ENCODE measurements at regions of chr11 and their contacts with region 1.

Region 1: GRCh38 chr11:44927174-44927661 is 23.5 kb downstream of the TP53I11 start:
- DNase-seq: peak; percentile 78 to 90
- ATAC-seq: peak; percentile 64
- H3K4me3 ChIP-seq: no peak overlapping the region
- H3K27ac ChIP-seq: no peak overlapping the region
- H3K4me1 ChIP-seq: no peaks in the 10 kb centered on the region
- H3K27me3 ChIP-seq: no peaks in the 10 kb centered on the region

Region 2: DNA sequence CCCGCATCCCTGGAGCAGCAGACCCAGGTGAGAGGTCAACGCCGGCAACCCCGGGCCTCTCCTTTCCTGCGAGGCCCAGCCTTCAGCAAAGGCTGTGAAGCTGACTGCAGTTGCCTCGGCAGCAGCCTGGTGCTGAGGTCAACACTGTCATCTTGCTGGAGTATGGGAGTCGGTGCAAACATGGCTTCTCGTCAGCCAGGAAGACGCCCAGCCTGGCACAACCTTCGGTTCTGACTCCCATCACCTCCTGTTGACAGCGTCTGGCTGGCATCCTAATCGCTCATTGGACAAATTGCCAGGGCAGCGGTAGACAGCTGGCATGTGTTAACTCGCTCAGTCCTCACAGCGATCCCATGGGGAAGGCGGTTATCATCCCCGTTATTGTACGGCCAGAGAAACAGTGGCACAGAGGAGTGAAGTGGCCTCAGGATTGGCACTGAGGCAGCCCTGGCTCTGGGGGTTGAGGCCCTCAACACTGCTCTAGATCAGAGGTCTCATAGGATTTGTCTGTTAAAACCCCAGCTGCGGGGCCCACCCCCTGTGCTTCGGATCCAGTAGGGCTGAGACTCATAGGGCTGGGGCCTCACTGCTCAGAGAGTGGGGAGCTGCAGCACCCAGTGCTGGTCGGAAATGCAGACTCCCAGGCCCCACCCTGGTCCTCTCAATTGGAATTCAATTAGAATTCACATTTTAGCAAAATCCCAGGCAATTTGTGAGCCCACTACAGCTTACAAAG is 62.8 kb after region 1 on chr11:
- intact Hi-C with region 1: no loop called
- DNase-seq: peak in 1 of 2 donors; percentile 81
- ATAC-seq: peak; percentile 33
- H3K4me3 ChIP-seq: no peak overlapping the region
- H3K27ac ChIP-seq: no peak overlapping the region
- H3K4me1 ChIP-seq: no peaks in the 10 kb centered on the region
- H3K27me3 ChIP-seq: no peaks in the 10 kb centered on the region

Region 3: DNA sequence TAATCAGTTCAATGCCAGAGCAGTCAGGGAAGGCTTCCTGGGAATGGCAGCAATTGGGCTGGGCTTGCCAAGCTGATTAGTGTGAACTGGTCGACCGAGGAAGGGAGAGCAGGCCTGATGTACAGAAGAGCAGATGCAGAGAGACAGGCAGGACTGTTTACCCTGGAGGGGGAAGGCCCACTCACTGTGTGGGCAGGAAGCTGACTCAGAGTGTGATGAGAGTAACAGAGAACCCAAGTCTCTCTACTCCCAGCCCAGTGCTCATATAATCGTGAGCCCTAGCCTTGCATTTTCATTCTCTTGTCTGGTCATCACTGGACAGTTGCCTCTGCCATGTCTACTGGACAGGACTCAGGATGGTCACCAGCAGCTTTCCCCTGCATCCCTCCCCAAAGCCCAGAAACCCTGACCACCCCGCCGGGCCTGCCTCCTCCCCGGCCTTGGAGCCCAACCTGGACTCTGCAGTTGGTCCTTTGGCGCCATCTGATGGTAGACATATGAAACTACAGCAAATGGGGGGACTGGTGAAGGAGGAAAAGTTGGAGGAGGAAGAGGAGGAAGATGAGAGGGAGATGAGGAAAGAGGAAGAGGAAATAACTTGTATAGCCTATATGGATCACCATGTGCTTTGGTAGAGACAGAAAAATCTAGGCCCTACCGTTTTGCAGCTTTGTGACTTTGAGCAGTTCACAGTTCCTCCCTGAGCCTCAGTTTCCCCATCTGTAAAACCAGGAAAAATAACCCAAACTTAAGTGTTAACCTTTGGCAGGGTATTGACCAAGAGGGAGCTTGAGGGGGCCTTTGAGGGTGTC is 175.8 kb after region 1 on chr11:
- intact Hi-C with region 1: loop called in 1 of 2 experiments (anchors 1 kb)
- DNase-seq: peak; percentile 71 to 84
- ATAC-seq: peak; percentile 80
- H3K4me3 ChIP-seq: no peak overlapping the region
- H3K27ac ChIP-seq: no peak overlapping the region
- H3K4me1 ChIP-seq: peaks cover 0 to 2% of the 10 kb centered on the region in 2 donors
- H3K27me3 ChIP-seq: no peaks in the 10 kb centered on the region

Measured in aorta (tissue), 5 donors.